Spleen (tissue), 13 donors: ENCODE measurements at regions of chr14 and their contacts with region 1.

Region 1: DNA sequence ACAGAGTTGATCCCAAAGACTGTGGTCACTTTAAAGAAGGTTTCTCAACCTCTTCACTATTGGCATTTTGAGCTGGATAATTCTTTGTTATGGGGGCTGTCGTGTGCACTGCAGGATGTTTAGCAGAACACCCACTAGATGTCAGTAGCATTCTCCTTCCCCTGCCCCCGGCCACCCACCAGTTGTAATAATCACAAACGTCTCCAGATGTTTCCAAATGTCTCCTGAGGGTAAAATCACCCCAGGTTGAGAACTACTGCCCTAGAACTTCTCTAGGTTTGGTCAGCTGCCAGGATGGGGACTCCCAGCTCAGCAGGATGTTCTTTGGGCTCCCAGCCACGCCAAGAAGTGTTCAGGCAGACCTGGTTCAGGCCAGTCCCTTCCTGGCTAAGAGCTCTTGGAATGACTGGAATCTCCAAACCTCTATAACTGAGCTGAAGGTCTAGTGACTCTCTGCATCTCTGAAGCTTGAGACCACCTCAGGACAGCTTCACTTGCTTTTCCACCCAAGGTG is 12.5 kb upstream of the AJUBA start:
- DNase-seq: no peak
- H3K4me3 ChIP-seq: no peak overlapping the region
- H3K27ac ChIP-seq: no peak overlapping the region
- H3K4me1 ChIP-seq: peaks cover 0 to 7% (median 2%) of the 10 kb centered on the region in 6 donors
- H3K27me3 ChIP-seq: no peaks in the 10 kb centered on the region
- CTCF ChIP-seq: peak in 9 of 11 experiments; percentile 13 to 62 (median 48)
- POLR2A ChIP-seq: no peak

Region 2: GRCh38 chr14:23041729-23042128 is 46.9 kb after region 1 on chr14:
- intact Hi-C with region 1: loop called (anchors 5 kb)
- DNase-seq: no peak
- H3K4me3 ChIP-seq: no peak overlapping the region
- H3K27ac ChIP-seq: no peak overlapping the region
- H3K4me1 ChIP-seq: peaks cover 0 to 17% (median 4%) of the 10 kb centered on the region in 6 donors
- H3K27me3 ChIP-seq: no peaks in the 10 kb centered on the region
- CTCF ChIP-seq: no peak
- POLR2A ChIP-seq: no peak

Region 3: DNA sequence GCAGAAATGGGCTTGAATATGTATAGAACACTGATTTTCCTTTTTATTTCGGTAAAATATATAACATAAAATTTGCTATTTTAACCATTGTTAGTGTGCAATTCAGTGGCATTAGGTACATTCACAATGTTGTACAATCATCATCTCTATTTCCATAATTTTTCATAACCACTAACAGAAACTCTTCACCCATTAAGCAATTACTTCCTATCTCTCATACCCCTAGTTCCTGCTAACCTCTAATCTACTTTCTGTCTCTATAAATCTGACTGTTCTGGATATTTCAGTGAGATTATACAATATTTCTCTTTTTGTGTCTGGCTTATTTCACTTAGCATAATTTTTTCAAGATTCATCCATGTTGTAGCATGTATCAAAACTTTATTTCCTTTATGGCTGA is 234.0 kb after region 1 on chr14:
- intact Hi-C with region 1: no loop called
- DNase-seq: no peak
- H3K4me3 ChIP-seq: no peak overlapping the region
- H3K27ac ChIP-seq: no peak overlapping the region
- H3K4me1 ChIP-seq: peaks cover 0 to 11% (median 0%) of the 10 kb centered on the region in 6 donors
- H3K27me3 ChIP-seq: no peaks in the 10 kb centered on the region
- CTCF ChIP-seq: no peak
- POLR2A ChIP-seq: no peak